PC-9 (cell line): ENCODE measurements at regions of chr6 and their contacts with region 1.

Region 1: GRCh38 chr6:125217992-125218391 is 64.4 kb downstream of the TPD52L1 start:
- DNase-seq: no peak
- H3K4me3 ChIP-seq: no peak overlapping the region
- H3K27ac ChIP-seq: no peak overlapping the region
- H3K4me1 ChIP-seq: no peaks in the 10 kb centered on the region
- H3K27me3 ChIP-seq: no peaks in the 10 kb centered on the region
- CTCF ChIP-seq: no peak

Region 2: GRCh38 chr6:125245523-125246260 is 27.7 kb after region 1 on chr6:
- CTCF ChIA-PET with region 1: no interaction called
- POLR2A ChIA-PET with region 1: no interaction called
- intact Hi-C with region 1: loop called (anchors 1 kb)
- DNase-seq: peak; percentile 76 to 86
- H3K4me3 ChIP-seq: peak overlapping the region; percentile 0; the same call in 1 of the 2 replicates
- H3K27ac ChIP-seq: peak overlapping the region; percentile 60
- H3K4me1 ChIP-seq: peaks cover 32% of the 10 kb centered on the region
- H3K27me3 ChIP-seq: no peaks in the 10 kb centered on the region
- CTCF ChIP-seq: no peak

Region 3: DNA sequence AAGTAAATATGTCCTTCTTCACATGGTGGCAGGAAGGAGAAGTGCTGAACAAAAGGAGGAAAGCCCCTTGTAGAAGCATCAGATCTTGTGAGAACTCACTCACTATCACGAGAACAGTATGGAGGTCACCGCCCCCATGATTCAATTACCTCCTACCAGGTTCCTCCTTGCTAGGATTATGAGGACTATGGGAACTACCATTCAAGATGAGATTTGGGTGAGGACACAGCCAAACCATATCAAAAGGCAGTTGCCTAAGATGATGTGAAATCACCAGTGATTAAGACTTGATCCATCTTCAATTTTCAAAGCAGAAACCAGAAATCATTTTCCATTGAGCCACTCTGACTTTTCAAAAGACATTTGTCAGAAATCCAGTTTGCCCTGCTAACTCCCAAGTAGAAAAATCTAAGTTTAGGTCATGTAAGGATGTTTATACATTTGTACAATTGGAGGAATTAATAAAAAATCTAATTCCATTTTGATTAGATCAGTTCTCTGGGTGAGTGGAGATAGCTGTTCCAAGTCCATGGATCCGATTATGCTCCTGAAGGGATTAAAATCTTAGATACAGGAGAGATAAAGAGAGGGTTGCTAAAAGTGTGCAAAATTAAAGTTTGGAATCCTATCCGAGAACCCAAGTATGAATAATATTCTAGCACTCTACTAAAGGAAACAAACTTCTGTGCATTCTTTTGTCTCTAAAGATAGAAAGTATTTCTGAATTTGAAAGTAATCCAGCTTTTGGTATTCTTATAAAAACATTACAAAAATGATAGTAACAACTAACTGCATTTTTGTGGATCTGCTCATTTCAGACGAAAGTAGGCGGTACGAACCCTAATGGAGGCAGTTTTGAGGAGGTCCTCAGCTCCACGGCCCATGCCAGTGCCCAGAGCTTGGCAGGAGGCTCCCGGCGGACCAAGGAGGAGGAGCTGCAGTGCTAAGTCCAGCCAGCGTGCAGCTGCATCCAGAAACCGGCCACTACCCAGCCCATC is 44.3 kb after region 1 on chr6:
- CTCF ChIA-PET with region 1: no interaction called
- POLR2A ChIA-PET with region 1: no interaction called
- intact Hi-C with region 1: no loop called
- DNase-seq: no peak
- H3K4me3 ChIP-seq: no peak overlapping the region
- H3K27ac ChIP-seq: no peak overlapping the region
- H3K4me1 ChIP-seq: no peaks in the 10 kb centered on the region
- H3K27me3 ChIP-seq: no peaks in the 10 kb centered on the region
- CTCF ChIP-seq: no peak

Region 4: DNA sequence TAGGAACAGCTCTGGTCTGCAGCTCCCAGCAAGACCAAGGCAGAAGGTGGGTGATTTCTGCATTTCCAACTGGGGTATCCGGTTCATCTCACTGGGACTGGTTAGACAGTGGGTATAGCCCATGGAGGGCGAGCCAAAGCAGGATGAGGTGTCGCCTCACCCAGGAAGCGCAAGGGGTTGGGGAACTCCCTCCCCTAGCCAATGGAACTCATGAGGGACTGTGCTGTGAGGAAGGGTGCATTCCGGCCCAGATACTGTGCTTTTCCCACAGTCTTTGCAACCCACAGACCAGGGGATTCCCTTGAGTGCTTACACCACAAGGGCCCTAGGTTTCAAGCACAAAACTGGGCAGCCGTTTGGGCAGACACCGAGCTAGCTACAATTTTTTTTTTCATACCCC is 62.0 kb after region 1 on chr6:
- CTCF ChIA-PET with region 1: no interaction called
- POLR2A ChIA-PET with region 1: no interaction called
- intact Hi-C with region 1: no loop called
- DNase-seq: no peak
- H3K4me3 ChIP-seq: no peak overlapping the region
- H3K27ac ChIP-seq: no peak overlapping the region
- H3K4me1 ChIP-seq: 0 out of 2 replicates have a peak, but pooled peaks cover under 1% of the 10 kb centered on the region
- H3K27me3 ChIP-seq: no peaks in the 10 kb centered on the region
- CTCF ChIP-seq: no peak